Transverse colon (tissue), 4 donors: ENCODE measurements at regions of chr17 and their contacts with region 1.

Region 1: GRCh38 chr17:8991514-8992285 is 26.2 kb upstream of the PIK3R5 start:
- DNase-seq: peak; percentile 70
- H3K4me3 ChIP-seq: no peak overlapping the region
- H3K27ac ChIP-seq: no peak overlapping the region
- H3K4me1 ChIP-seq: no peaks in the 10 kb centered on the region
- H3K27me3 ChIP-seq: peaks cover 5% of the 10 kb centered on the region
- CTCF ChIP-seq: peak; percentile 69 to 84 (median 82)
- EP300 ChIP-seq: no peak
- POLR2A ChIP-seq: no peak

Region 2: GRCh38 chr17:8894673-8895578 is 96.8 kb before region 1 on chr17:
- in situ Hi-C with region 1: loop called in 1 of 4 experiments (anchors 25 kb)
- intact Hi-C with region 1: no loop called
- DNase-seq: peak; percentile 53
- H3K4me3 ChIP-seq: no peak overlapping the region
- H3K27ac ChIP-seq: no peak overlapping the region
- H3K4me1 ChIP-seq: peaks cover 0 to 5% (median 0%) of the 10 kb centered on the region in 4 donors
- H3K27me3 ChIP-seq: no peaks in the 10 kb centered on the region
- CTCF ChIP-seq: peak; percentile 60 to 80 (median 76)
- EP300 ChIP-seq: no peak
- POLR2A ChIP-seq: no peak

Region 3: DNA sequence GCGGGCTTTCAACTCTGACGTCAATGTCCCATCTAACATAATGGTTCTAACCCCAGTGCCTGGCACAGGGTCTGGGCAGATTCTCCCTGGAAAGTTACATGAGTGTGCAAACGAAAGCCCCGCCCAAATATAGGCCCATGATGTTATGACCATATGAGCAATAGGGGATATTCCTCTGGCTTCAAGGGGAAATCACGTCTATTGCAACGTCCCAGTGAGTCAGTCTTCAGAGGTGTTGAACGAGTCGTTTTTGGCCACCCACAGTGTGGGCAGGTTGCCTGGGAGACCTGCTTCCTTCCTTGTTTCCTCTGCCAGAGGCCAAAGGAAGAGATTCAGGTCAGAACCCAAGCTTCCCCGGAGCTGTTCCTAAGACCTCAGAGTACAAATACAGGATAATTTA is 56.5 kb before region 1 on chr17:
- in situ Hi-C with region 1: no loop called
- intact Hi-C with region 1: no loop called
- DNase-seq: no peak
- H3K4me3 ChIP-seq: no peak overlapping the region
- H3K27ac ChIP-seq: no peak overlapping the region
- H3K4me1 ChIP-seq: no peaks in the 10 kb centered on the region
- H3K27me3 ChIP-seq: no peaks in the 10 kb centered on the region
- CTCF ChIP-seq: no peak
- EP300 ChIP-seq: no peak
- POLR2A ChIP-seq: no peak

Region 4: GRCh38 chr17:9522074-9522473 is 530.4 kb after region 1 on chr17:
- in situ Hi-C with region 1: loop called (anchors 25 kb)
- intact Hi-C with region 1: loop called (anchors 10 kb)
- DNase-seq: no peak
- H3K4me3 ChIP-seq: no peak overlapping the region
- H3K27ac ChIP-seq: no peak overlapping the region
- H3K4me1 ChIP-seq: no peaks in the 10 kb centered on the region
- H3K27me3 ChIP-seq: no peaks in the 10 kb centered on the region
- CTCF ChIP-seq: peak; percentile 24 to 50 (median 38)
- EP300 ChIP-seq: no peak
- POLR2A ChIP-seq: no peak

Region 5: DNA sequence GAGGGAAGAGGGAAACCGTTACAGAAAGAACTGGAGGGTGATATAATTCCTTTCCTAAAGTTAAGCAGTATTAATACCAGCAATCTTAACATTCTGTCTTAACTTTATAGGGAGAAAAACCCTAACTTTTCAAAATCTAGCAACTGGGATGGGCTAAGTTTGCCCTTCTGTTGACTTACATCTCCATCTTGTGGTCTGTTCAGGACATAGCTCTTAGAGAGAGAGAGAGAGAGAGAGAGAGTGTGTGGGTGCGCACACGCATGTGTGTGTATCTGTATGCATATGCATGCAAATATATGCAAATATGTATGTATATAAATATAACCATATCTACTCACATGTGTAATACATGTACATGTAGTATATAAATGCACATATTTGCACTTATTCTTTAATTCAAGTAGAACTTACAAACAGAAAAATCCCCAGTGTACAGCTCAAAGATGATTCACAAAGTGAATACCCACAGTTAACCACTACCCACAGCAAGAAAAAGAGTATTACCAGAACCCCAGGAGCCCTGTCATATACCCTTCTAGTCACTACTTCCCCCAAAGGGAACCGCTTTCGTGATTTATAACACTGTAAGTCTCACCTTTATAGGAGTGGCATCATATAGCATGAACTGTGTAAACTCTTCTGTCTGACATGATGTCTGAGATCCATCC is 537.5 kb after region 1 on chr17:
- in situ Hi-C with region 1: loop called (anchors 25 kb)
- intact Hi-C with region 1: loop called (anchors 10 kb)
- DNase-seq: no peak
- H3K4me3 ChIP-seq: no peak overlapping the region
- H3K27ac ChIP-seq: no peak overlapping the region
- H3K4me1 ChIP-seq: no peaks in the 10 kb centered on the region
- H3K27me3 ChIP-seq: no peaks in the 10 kb centered on the region
- CTCF ChIP-seq: peak in 4 of 5 experiments; percentile 21 to 31 (median 26)
- EP300 ChIP-seq: no peak
- POLR2A ChIP-seq: no peak